ENCODE measurements at regions of chr6 and their contacts with region 1.

Region 1: DNA sequence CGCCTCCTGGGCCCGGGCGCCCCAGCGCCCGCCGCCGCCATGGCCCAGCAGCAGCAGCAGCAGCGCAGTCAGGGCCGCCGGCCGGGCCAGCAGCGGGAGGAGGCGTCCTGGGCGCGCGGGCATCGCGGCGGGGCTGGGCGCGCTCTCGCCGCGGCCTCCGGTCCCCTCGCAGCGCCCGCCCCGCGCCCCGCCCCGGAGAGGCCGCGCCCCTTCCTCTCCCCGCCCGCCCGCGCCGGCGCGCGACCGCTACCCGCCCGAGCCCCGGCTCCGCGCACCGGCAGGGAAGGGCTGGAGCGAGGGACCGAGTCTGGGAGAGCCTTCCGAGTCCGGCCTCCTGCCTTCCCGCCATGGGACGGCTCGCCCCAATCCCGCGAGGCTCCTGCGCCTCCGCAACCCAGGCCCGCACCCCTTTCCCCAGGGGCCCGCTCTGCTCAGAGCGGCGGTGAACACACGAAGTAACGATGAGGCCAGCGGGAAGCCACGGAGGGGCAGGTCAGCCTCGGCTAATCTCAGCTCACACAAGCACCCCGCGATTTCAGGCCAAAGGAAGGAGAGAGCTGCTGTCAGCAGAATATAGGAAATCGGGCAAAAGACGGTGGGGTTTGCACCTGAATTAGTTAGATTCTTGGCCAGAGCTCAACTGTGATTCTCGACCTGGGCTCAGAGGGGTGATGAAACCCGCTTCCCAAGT is at the start of gene TXNDC5:
- DNase-seq: peak in 1 of 2 experiments; percentile 82
- H3K4me3 ChIP-seq: peak within 1 kb of the TSS; percentile 75 to 94 (median 80)
- H3K27ac ChIP-seq: no peak within 1 kb of the TSS; the same call in 1 of the 2 replicates
- H3K4me1 ChIP-seq: peaks cover 2 to 9% (median 3%) of the 10 kb centered on the region in 4 experiments; a peak in 5 of 7 replicates
- H3K27me3 ChIP-seq: peaks cover 0 to 14% (median 3%) of the 10 kb centered on the region in 4 experiments; a peak in 4 of 7 replicates
- CTCF ChIP-seq: no peak
- EP300 ChIP-seq: no peak
- POLR2A ChIP-seq: peak; percentile 59 to 67
- RAD21 ChIP-seq: no peak
- total RNA-seq, gene TXNDC5: 169 and 172 TPM in 2 replicates

Region 2: GRCh38 chr6:7992002-7992815 is 81.4 kb after region 1 on chr6:
- CTCF ChIA-PET with region 1: interaction called, 14 read pairs
- POLR2A ChIA-PET with region 1: no interaction called
- DNase-seq: no peak
- H3K4me3 ChIP-seq: no peak overlapping the region
- H3K27ac ChIP-seq: no peak overlapping the region
- H3K4me1 ChIP-seq: no peaks in the 10 kb centered on the region
- H3K27me3 ChIP-seq: no peaks in the 10 kb centered on the region
- CTCF ChIP-seq: peak in 2 of 3 experiments; percentile 16 to 27; a peak in 2 of 4 replicates
- EP300 ChIP-seq: no peak
- POLR2A ChIP-seq: no peak
- RAD21 ChIP-seq: peak; percentile 55 to 62

Region 3: DNA sequence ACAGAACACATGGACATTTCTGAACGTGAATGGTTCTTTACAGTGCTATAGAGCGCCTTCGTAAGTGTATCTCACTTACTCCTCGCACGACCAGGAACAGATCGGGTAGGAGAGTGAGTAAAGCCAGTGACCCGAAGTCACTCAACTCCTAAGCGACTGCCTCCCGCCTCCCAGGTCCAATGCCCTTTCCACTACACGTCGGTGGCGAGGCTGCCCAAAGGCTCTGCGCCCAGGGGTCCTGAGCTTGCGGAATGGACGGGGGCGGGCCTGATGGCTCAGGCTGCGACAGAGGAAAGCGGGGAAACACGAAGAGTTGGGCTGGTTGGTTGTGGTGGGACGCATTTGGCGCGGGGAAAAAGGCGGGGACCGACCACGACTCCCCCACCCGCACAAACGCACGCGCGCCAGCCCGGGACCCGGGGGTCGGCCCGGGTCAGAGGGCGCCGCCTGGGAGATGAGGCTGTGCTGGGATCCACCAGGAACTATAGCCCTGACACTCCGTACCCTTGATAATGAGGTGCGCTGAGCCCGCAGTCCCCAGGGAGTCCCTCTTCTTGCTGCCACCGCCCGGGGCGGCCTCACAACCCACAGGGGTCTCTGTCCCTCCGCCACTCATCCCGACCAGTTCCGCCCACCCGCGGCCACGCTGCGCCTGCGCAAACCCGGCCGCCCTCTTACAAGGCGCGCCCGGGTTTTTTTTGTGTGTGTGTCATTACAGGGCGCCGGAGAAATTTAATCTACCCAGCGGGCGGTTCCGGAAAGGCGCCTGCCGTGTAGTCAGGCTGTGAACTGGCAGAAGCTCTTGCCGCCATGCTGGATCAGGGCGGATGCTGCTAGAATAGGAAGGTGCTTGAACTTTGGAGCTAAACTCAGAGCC is 153.2 kb after region 1 on chr6 and contains the start of gene BLOC1S5:
- CTCF ChIA-PET with region 1: interaction called, 3 read pairs
- POLR2A ChIA-PET with region 1: interaction called, 10 read pairs
- DNase-seq: peak; percentile 93 to 98
- H3K4me3 ChIP-seq: peak within 1 kb of the TSS; percentile 83 to 94 (median 88)
- H3K27ac ChIP-seq: peak within 1 kb of the TSS; percentile 77
- H3K4me1 ChIP-seq: peaks cover 0 to 5% (median 4%) of the 10 kb centered on the region in 4 experiments; a peak in 4 of 7 replicates
- H3K27me3 ChIP-seq: no peaks in the 10 kb centered on the region
- CTCF ChIP-seq: no peak
- EP300 ChIP-seq: peak in 1 of 2 experiments; percentile 86; a peak in 1 of 3 replicates
- POLR2A ChIP-seq: peak; percentile 41 to 81
- RAD21 ChIP-seq: no peak
- total RNA-seq, gene BLOC1S5: 15.4 and 17.2 TPM in 2 replicates